Panc1 (cell line): ENCODE measurements at regions of chr9 and their contacts with region 1.

Region 1: DNA sequence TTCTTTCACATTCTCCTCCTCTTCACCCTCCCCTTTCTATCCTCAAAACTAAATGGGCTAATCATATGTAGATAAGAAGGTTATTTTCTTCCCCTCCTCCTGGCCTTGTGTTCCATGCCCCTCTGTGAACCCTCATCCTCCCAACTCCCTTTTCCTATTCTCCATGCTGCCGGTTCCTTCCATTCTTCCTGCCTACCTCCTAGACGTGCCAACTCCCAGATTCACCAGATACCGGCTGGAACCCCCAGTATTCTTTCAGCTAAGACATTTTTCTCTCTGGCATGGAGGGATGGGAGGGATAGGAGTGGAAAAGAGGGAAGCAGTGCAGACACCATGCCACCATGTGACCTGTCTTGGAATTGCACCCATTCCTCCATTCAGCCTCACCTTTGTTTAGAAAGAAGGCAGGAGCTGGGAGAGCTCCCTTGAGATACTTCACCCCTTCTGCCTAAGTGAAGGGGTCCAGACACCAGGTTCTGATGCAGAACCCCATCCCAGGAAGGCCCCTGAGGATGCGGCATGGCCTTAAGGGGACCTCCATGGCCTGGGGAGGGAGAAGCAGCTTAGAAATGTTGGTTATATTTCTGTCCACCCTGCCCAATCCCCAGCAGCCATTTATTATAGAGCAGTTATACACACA is 4.8 kb downstream of the DNAJB5 start:
- DNase-seq: no peak
- ATAC-seq: peak; percentile 62
- H3K4me3 ChIP-seq: no peak overlapping the region
- H3K27ac ChIP-seq: no peak overlapping the region
- H3K4me1 ChIP-seq: peaks cover 44% of the 10 kb centered on the region
- H3K27me3 ChIP-seq: no peaks in the 10 kb centered on the region
- CTCF ChIP-seq: no peak

Region 2: GRCh38 chr9:34691936-34692315 is 302.5 kb before region 1 on chr9:
- CTCF ChIA-PET with region 1: no interaction called
- POLR2A ChIA-PET with region 1: interaction called, 17 read pairs
- in situ Hi-C with region 1: no loop called
- intact Hi-C with region 1: no loop called
- DNase-seq: no peak
- ATAC-seq: no peak
- H3K4me3 ChIP-seq: no peak overlapping the region
- H3K27ac ChIP-seq: no peak overlapping the region
- H3K4me1 ChIP-seq: no peaks in the 10 kb centered on the region
- H3K27me3 ChIP-seq: no peaks in the 10 kb centered on the region
- CTCF ChIP-seq: no peak

Region 3: DNA sequence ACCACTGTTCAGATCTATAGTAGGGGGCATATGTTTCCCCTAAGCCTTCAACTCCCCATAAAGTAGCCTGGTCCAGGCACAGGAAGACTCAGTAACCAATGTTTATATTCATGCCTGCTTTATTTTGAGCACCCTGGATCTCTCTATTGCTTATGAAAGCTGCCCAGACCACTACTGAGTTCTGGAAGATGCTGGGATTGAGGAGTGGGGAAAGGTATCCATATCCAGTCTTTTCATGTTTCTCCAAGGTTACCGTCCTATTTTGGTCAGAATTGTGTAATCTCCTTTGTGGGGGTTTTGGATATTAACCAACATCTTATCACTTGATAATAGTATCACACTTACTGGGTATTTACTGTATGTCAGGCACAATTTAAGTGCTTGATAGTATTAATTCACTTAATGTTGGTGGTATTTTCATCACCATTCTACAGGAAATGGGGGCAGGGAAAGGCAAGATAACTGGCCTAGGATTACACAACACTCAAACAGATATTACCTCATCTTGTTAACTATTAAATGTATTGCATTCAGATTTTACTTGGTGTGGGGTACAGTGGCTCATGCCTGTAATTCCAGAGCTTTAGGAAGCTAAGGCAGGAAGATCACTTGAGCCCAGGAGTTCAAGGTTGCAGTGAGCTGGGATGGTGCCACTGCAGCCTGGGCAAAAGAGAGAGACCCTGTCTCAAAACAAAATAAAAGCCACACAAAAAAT is 531.9 kb after region 1 on chr9:
- CTCF ChIA-PET with region 1: no interaction called
- POLR2A ChIA-PET with region 1: no interaction called
- in situ Hi-C with region 1: no loop called
- intact Hi-C with region 1: no loop called
- DNase-seq: no peak
- ATAC-seq: no peak; the same call in 1 of the 2 replicates
- H3K4me3 ChIP-seq: no peak overlapping the region
- H3K27ac ChIP-seq: peak overlapping the region; percentile 60
- H3K4me1 ChIP-seq: peaks cover 40% of the 10 kb centered on the region
- H3K27me3 ChIP-seq: no peaks in the 10 kb centered on the region
- CTCF ChIP-seq: no peak